ENCODE measurements at regions of chr20 and their contacts with region 1.

Region 1: DNA sequence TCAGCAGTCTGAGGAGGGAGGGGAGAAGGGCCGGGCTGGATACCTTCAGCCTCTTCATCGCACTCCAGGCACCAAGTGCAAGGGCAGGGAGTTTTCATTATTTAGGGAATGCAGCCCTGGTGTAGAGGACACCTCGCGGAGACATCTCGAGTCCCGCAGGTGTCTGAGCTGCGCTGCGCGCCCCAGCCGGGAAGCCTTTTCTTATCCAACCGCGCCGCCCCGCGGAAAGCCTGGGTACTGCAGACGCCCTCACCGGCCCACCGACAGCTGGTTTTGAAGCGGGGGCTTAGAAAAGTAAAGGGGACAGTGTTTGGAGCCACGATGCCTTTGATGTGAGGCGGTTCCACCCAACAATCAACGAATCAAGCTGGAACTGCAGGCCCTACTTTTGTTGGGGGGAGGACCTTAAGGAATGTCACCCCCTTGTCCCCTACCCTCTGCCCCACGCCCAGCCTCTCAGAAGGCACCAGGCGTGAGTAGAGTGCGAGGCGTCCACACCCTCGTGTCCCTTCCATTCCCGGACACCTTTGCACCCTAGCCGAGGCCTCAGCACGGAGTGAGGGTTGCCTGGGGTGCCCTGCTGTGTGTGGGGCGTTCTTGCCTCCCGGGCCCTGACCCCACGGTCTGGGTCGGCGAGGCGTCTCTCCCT is 8.6 kb downstream of the NKX2-2 start:
- DNase-seq: peak; percentile 48
- H3K4me3 Mint-ChIP-seq: peak overlapping the region; percentile 39
- H3K27ac Mint-ChIP-seq: no peak overlapping the region
- H3K4me1 Mint-ChIP-seq: no peaks in the 10 kb centered on the region
- H3K27me3 Mint-ChIP-seq: peaks cover 14% of the 10 kb centered on the region
- CTCF ChIP-seq: peak; percentile 99

Region 2: GRCh38 chr20:20837574-20838021 is 667.7 kb before region 1 on chr20:
- CTCF ChIA-PET with region 1: interaction called, 130 read pairs
- POLR2A ChIA-PET with region 1: no interaction called
- intact Hi-C with region 1: loop called (anchors 1 kb)
- DNase-seq: peak; percentile 50
- H3K4me3 Mint-ChIP-seq: no peak overlapping the region
- H3K27ac Mint-ChIP-seq: no peak overlapping the region
- H3K4me1 Mint-ChIP-seq: no peaks in the 10 kb centered on the region
- H3K27me3 Mint-ChIP-seq: peaks cover 17% of the 10 kb centered on the region
- CTCF ChIP-seq: peak; percentile 79

Region 3: GRCh38 chr20:21125849-21126580 is 379.3 kb before region 1 on chr20 and contains the start of gene KIZ:
- CTCF ChIA-PET with region 1: interaction called, 13 read pairs
- POLR2A ChIA-PET with region 1: interaction called, 3 read pairs
- intact Hi-C with region 1: no loop called
- DNase-seq: peak; percentile 93
- H3K4me3 Mint-ChIP-seq: peak within 1 kb of the TSS; percentile 85
- H3K27ac Mint-ChIP-seq: peak within 1 kb of the TSS; percentile 86
- H3K4me1 Mint-ChIP-seq: peaks cover 9% of the 10 kb centered on the region
- H3K27me3 Mint-ChIP-seq: no peaks in the 10 kb centered on the region
- CTCF ChIP-seq: peak; percentile 31
- total RNA-seq, gene KIZ: 47.2 and 56.1 TPM in 2 replicates

Region 4: DNA sequence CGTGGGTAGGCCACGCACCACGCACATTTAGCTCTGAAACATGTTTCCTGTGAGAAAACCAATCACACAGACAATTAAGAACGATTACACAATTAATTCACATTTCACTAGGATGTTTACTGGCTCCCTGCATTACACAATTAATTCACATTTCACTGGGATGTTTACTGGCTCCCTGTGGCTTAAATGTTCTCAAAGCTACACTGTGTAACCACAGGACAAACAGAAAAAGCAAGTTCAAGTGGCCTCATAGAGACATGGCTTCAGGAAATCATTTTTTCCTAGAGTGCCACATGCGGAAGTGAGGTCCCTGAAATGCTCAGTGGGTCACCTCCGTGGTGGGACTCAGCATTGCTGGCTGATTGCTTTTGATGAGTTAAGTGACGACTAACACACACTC is 263.9 kb before region 1 on chr20:
- CTCF ChIA-PET with region 1: interaction called, 329 read pairs
- POLR2A ChIA-PET with region 1: interaction called, 20 read pairs
- intact Hi-C with region 1: loop called (anchors 1 kb)
- DNase-seq: no peak
- H3K4me3 Mint-ChIP-seq: no peak overlapping the region
- H3K27ac Mint-ChIP-seq: no peak overlapping the region
- H3K4me1 Mint-ChIP-seq: no peaks in the 10 kb centered on the region
- H3K27me3 Mint-ChIP-seq: no peaks in the 10 kb centered on the region
- CTCF ChIP-seq: no peak

Region 5: GRCh38 chr20:21339499-21339898 is 165.8 kb before region 1 on chr20:
- CTCF ChIA-PET with region 1: interaction called, 16 read pairs
- POLR2A ChIA-PET with region 1: no interaction called
- intact Hi-C with region 1: no loop called
- DNase-seq: peak; percentile 8
- H3K4me3 Mint-ChIP-seq: no peak overlapping the region
- H3K27ac Mint-ChIP-seq: no peak overlapping the region
- H3K4me1 Mint-ChIP-seq: peaks cover 5% of the 10 kb centered on the region
- H3K27me3 Mint-ChIP-seq: no peaks in the 10 kb centered on the region
- CTCF ChIP-seq: no peak

Region 6: DNA sequence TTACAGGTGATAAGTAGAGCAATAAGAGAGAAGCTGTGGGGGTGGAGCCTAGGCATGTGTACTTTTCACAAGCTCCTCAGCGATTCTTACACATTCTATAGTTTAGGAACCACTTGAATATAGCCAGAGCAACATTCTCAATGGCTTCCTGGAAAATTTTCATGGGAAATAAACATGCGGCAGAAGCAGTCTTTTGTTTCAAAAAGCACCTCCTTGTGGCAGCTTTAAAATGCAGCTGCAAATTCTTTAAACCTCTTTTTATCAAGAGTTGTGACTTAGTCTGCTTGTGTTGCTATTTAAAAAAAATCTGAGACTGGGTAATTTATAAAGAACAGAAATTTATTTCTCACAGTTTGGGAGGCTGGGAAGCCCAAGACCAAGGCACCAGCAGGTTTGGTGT is 15.2 kb before region 1 on chr20:
- CTCF ChIA-PET with region 1: interaction called, 37 read pairs
- POLR2A ChIA-PET with region 1: no interaction called
- intact Hi-C with region 1: no loop called
- DNase-seq: no peak
- H3K4me3 Mint-ChIP-seq: no peak overlapping the region
- H3K27ac Mint-ChIP-seq: no peak overlapping the region
- H3K4me1 Mint-ChIP-seq: no peaks in the 10 kb centered on the region
- H3K27me3 Mint-ChIP-seq: peaks cover 15% of the 10 kb centered on the region
- CTCF ChIP-seq: peak; percentile 18

Region 7: GRCh38 chr20:21615617-21616080 is 110.4 kb after region 1 on chr20:
- CTCF ChIA-PET with region 1: interaction called, 18 read pairs
- POLR2A ChIA-PET with region 1: no interaction called
- intact Hi-C with region 1: no loop called
- DNase-seq: peak; percentile 61
- H3K4me3 Mint-ChIP-seq: no peak overlapping the region
- H3K27ac Mint-ChIP-seq: no peak overlapping the region
- H3K4me1 Mint-ChIP-seq: no peaks in the 10 kb centered on the region
- H3K27me3 Mint-ChIP-seq: peaks cover 25% of the 10 kb centered on the region
- CTCF ChIP-seq: peak; percentile 83

Region 8: DNA sequence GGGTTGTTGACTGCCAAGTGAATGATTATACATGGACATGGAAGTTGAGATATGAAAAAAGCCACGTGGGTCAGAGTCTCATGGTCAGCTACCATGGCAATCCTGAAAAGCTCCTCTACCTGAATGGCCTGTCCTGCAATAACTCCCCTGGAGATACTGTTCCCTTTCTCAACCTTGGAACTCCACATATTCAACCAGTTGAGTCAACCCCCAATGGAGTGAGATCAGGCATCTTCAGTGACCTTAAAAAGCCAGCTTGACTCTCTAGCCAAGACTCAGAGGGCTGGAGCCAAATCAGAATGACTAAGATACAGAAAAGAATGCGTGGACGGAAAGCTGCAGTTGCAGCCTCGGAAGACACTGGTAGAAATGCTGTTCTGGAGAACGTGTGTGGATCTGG is 737.8 kb after region 1 on chr20:
- CTCF ChIA-PET with region 1: no interaction called
- POLR2A ChIA-PET with region 1: no interaction called
- intact Hi-C with region 1: no loop called
- DNase-seq: no peak
- H3K4me3 Mint-ChIP-seq: no peak overlapping the region
- H3K27ac Mint-ChIP-seq: no peak overlapping the region
- H3K4me1 Mint-ChIP-seq: no peaks in the 10 kb centered on the region
- H3K27me3 Mint-ChIP-seq: peaks cover 34% of the 10 kb centered on the region
- CTCF ChIP-seq: no peak

Measured in MCF 10A (cell line).